Heart left ventricle (tissue), 16 donors: ENCODE measurements at regions of chr11 and their contacts with region 1.

Region 1: GRCh38 chr11:9748361-9748970 is 84.6 kb downstream of the SWAP70 start:
- DNase-seq: peak in 4 of 5 donors; percentile 53 to 57 (median 56)
- ATAC-seq: peak; percentile 84 to 91 (median 88)
- H3K4me3 ChIP-seq: no peak overlapping the region
- H3K27ac ChIP-seq: peak overlapping the region in 2 of 12 donors; percentile 41 to 53
- H3K4me1 ChIP-seq: peaks cover 0 to 24% (median 9%) of the 10 kb centered on the region in 12 donors
- H3K27me3 ChIP-seq: no peaks in the 10 kb centered on the region
- CTCF ChIP-seq: peak; percentile 61 to 82 (median 71)
- POLR2A ChIP-seq: no peak

Region 2: DNA sequence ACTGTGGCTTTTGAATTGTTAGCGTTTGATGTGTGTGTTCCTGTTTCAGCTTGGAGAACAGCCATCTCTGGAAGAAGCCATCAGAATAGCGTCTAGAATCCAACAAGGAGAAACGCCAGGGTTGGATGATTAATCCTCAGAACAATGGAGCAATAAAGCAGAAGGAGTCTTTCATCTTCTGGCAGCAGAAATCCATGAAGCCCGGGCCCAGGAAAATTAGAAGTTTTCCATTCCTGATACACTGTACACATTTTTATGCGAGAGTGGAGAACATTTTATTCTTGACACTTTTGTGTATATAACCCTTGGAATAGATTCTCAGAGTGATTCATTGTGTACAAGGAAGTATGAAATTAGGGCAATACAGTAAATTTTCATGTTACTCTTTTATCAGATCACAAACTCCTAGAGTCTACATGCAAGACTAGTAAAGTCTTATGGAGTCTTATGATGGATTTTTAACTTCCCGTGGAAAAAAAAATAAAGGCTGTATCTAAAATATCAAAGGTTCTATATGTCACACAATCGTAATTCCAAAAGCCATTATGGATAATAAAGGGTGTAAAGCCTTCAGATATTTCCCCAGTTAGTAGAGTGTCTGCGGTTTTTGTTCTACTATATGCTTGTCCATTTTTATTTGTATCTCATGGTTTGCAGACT is 220.9 kb before region 1 on chr11:
- intact Hi-C with region 1: loop called in 5 of 10 experiments (anchors 5 to 10 kb)
- DNase-seq: no peak
- ATAC-seq: peak in 3 of 4 donors; percentile 50 to 74 (median 68)
- H3K4me3 ChIP-seq: no peak overlapping the region
- H3K27ac ChIP-seq: peak overlapping the region in 6 of 12 donors; percentile 25 to 78 (median 38)
- H3K4me1 ChIP-seq: peaks cover 0 to 28% (median 11%) of the 10 kb centered on the region in 12 donors
- H3K27me3 ChIP-seq: no peaks in the 10 kb centered on the region
- CTCF ChIP-seq: no peak
- POLR2A ChIP-seq: no peak

Region 3: GRCh38 chr11:9534791-9535781 is 213.4 kb before region 1 on chr11:
- intact Hi-C with region 1: loop called in 7 of 10 experiments (anchors 2 to 10 kb)
- DNase-seq: peak; percentile 62 to 88 (median 75)
- ATAC-seq: peak; percentile 49 to 87 (median 80)
- H3K4me3 ChIP-seq: no peak overlapping the region
- H3K27ac ChIP-seq: no peak overlapping the region
- H3K4me1 ChIP-seq: peaks cover 0 to 12% (median 2%) of the 10 kb centered on the region in 12 donors
- H3K27me3 ChIP-seq: no peaks in the 10 kb centered on the region
- CTCF ChIP-seq: peak; percentile 59 to 88 (median 74)
- POLR2A ChIP-seq: no peak

Region 4: DNA sequence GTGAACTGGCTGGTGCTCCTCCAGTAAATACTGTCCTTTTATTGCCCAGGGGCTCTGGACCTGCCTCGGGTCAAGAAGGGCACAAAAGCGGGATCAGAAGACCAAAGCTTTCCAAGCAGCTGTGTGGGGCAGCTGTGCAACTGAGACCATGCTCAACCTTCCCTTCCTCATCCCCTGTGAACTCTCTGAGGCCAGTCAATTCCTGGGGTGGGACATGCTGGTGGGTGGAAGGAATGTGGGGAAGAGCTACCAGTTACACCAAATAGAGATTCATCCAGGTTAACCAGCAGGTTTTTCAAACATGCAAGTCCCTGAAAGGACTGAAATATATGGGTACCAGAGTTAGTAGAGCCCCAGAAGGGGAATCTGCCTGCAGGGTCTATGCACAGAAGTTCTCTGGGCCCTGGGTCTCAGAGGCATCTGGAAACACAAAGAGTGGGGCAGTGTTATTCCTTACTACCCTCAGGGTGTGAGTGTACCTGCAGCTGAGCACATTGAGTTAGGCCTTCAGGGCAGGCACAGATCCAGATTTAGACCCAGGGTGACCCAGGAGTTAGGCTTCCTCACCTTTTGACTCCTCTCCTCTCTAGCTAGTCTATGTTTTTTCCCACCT is 128.6 kb before region 1 on chr11:
- intact Hi-C with region 1: loop called in 5 of 10 experiments (anchors 5 kb)
- DNase-seq: no peak
- ATAC-seq: no peak
- H3K4me3 ChIP-seq: no peak overlapping the region
- H3K27ac ChIP-seq: no peak overlapping the region
- H3K4me1 ChIP-seq: peaks cover 0 to 15% (median 3%) of the 10 kb centered on the region in 12 donors
- H3K27me3 ChIP-seq: no peaks in the 10 kb centered on the region
- CTCF ChIP-seq: no peak
- POLR2A ChIP-seq: no peak

Region 5: DNA sequence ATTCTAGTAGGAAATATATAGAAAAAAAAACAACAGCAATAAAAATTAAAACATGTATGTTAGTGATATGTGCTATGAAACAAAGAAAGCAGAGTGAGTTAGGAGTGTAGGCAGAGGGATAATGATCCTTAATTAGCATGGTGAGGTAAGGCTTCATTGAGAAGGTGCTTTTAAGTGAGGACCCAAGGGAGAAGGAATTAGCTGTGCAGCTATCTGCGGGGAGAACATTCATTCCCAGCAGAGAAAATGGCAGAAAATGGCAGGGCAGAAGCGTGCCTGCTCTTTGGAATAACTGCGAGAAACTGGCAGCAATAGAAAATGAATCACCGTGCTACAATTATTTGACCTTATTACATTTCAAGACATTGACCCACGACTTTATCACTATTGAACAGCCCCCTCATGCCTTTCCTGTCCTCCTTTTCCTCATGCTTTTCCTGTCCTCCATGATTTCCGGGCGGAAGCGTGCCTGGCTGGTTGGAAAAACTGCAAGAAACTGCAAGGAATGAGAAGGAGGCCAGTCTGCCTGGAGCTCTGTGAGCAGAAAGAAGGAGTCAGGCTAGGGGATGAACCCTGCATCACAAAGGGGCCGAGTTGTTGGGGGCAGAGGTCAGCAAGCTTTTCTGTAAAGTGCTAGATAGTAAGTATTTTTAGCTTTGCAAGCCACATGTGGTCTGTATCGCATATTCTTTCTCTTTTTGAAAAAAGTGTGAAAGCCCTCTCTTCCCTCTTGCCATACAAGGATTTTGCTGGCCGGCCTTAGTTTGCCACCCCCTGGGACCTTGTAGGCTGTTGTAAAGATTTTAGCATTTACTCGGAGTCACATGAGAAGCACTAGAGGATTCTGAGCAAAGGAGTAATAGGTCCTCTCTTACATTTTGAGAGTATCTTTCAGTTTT is 121.7 kb before region 1 on chr11:
- intact Hi-C with region 1: loop called in 2 of 10 experiments (anchors 5 kb)
- DNase-seq: peak in 4 of 5 donors; percentile 26 to 43 (median 38)
- ATAC-seq: peak; percentile 37 to 83 (median 46)
- H3K4me3 ChIP-seq: no peak overlapping the region
- H3K27ac ChIP-seq: peak overlapping the region in 9 of 12 donors; percentile 1 to 60 (median 39)
- H3K4me1 ChIP-seq: peaks cover 0 to 29% (median 15%) of the 10 kb centered on the region in 12 donors
- H3K27me3 ChIP-seq: no peaks in the 10 kb centered on the region
- CTCF ChIP-seq: no peak
- POLR2A ChIP-seq: no peak

Region 6: DNA sequence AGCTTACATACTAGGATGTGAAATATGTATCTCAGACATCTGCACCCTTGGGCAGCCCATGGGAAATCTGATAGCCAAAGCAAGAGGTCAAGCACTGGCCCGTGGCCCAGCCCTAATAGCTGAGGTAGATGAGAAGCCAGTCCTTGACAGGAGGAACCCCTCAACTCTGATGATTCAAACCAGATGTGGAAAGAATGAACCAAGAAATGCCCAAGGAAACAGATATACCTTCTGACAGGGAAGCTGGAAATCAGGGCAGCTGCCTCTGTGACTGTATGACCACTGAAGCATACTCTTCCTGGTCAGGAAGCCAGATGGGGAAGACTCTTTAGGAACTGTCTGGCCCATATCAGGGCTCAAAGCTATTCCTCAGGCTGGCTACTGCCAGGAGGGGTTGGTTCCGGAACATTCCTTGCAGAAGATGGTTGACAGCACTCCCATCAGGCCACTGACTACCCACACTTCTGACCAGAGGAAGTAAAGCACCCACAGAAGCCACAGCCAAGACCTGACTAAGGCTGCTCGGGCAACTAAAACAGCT is 39.6 kb after region 1 on chr11:
- intact Hi-C with region 1: no loop called
- DNase-seq: peak in 4 of 5 donors; percentile 32 to 64 (median 59)
- ATAC-seq: peak; percentile 7 to 76 (median 46)
- H3K4me3 ChIP-seq: no peak overlapping the region
- H3K27ac ChIP-seq: peak overlapping the region in 7 of 12 donors; percentile 8 to 47 (median 40)
- H3K4me1 ChIP-seq: peaks cover 0 to 25% (median 8%) of the 10 kb centered on the region in 12 donors
- H3K27me3 ChIP-seq: no peaks in the 10 kb centered on the region
- CTCF ChIP-seq: no peak
- POLR2A ChIP-seq: no peak

Region 7: GRCh38 chr11:9884601-9885000 is 136.1 kb after region 1 on chr11:
- intact Hi-C with region 1: no loop called
- DNase-seq: no peak
- ATAC-seq: no peak
- H3K4me3 ChIP-seq: no peak overlapping the region
- H3K27ac ChIP-seq: no peak overlapping the region
- H3K4me1 ChIP-seq: peaks cover 0 to 5% (median 0%) of the 10 kb centered on the region in 12 donors
- H3K27me3 ChIP-seq: no peaks in the 10 kb centered on the region
- CTCF ChIP-seq: no peak
- POLR2A ChIP-seq: no peak